ENCODE measurements at regions of chr1 and their contacts with region 1.

Region 1: GRCh38 chr1:175278737-175279122 is 86.2 kb upstream of the KIAA0040 start:
- DNase-seq: no peak
- H3K4me3 Mint-ChIP-seq: no peak overlapping the region
- H3K27ac Mint-ChIP-seq: no peak overlapping the region
- H3K4me1 Mint-ChIP-seq: peaks cover 5% of the 10 kb centered on the region
- H3K27me3 Mint-ChIP-seq: peaks cover 7% of the 10 kb centered on the region

Region 2: DNA sequence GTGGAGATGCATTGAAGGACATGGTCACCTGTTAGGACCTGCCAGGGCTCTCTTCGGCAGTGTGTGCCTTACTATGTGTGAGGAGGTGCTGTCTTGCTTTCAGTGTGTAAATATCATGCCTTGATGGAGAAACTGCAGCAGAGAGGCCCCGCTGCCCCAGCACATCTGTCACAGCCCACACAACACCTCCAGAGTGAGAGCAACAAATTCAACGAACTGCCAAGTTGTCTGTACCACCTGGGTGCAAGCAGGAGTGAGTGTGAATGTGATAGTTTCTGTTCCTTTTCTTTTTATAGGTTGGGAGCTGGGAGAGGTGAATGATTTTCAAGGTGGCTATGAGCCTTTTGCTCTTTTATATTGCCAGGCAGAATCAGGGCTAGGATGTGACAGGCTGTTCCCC is 28.4 kb after region 1 on chr1:
- intact Hi-C with region 1: no loop called
- DNase-seq: no peak
- H3K4me3 Mint-ChIP-seq: no peak overlapping the region
- H3K27ac Mint-ChIP-seq: no peak overlapping the region
- H3K4me1 Mint-ChIP-seq: no peaks in the 10 kb centered on the region
- H3K27me3 Mint-ChIP-seq: peaks cover 31% of the 10 kb centered on the region

Region 3: DNA sequence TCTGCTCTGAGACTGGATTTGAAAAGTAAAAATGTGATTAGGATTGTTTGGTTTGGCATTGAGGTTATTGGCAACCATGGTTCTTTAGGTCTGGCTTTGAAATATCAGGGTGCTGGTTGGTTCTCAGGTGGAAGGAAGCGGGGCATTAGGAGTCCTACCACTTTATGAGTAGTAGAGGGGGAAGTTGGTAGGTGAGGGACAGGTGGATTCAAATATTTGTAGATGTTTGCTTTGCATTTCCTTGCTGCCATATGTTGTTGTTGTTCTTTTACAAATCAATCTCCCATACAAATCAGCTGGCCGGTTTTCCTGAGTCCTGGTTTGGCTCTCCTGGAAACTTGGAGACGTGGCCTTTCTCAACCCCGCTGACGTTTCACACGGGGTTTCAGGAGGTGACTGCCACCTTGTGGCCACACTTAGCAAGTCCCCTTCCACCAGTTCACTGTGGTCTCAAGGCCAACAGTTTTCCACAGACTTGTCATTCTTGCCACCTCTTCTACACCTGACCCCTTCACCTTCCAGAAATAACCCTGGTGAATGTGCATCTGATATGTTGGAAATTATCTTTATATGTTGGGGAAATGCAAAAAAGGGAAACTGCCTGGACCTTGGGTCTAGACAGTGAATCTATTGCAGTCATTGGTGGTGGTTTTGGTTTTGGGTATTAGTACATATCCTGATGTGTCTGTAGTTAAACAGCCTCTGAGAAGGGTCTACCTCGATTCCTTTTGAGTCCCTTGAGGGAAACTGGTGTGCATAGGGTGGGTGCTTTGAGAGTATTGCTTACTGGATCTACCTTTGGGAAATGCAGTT is 40.9 kb after region 1 on chr1:
- intact Hi-C with region 1: loop called (anchors 1 kb)
- DNase-seq: peak; percentile 47
- H3K4me3 Mint-ChIP-seq: no peak overlapping the region
- H3K27ac Mint-ChIP-seq: no peak overlapping the region
- H3K4me1 Mint-ChIP-seq: peaks cover 12% of the 10 kb centered on the region
- H3K27me3 Mint-ChIP-seq: peaks cover 11% of the 10 kb centered on the region

Measured in activated T-helper 1 cell treated with anti-CD3 and anti-CD28 coated beads, Interleukin-12 subunit alpha, Interleukin-12 subunit beta, Interleukin-2, Interleukin-4 antibody, amounts not matched to agents 30 ng/mL and 10 ng/mL and 1 ng/mL, durations not matched to agents 14 hours and 24 hours and 36 hours (primary cell).